MCF 10A (cell line): ENCODE measurements at regions of chr1 and their contacts with region 1.

Region 1: DNA sequence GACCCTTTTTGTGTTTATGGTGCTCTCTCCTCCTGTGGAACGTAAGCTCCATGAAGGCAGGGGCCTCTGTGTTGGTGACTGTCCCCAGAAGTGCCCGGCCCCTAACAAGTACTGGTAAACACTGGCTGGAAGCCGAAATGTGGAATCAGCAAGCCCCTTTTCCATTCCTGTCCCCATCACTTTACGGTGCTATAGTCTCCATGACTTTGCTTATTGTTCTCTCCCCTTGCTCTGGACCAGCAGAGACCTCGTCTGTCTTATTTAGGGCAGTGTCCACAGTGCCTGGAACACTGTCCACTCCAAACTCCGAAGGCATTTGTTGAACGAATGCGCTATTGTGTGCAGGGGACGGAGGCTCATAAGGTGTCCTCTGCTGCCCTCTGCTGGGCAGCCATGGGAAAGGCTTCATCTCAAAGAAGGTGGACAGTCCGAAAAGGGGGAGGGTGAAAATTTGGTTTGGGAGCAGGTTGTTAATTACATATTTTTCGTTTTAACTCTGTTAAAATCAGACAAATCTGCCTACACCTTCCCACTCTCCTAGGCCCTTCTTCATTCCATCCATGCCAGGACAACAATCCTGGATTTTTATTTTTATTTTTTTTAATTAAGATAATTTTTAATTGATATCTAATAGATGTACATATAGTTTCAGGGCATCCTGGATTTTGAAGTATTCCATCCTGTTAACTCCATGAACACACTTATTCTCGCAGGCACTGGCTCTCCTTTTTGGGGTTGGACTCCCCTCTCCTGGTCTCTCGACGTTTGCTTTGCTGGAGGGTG is 115.6 kb downstream of the PGBD5 start:
- DNase-seq: peak; percentile 96
- H3K4me3 Mint-ChIP-seq: no peak overlapping the region
- H3K27ac Mint-ChIP-seq: no peak overlapping the region
- H3K4me1 Mint-ChIP-seq: peaks cover 34% of the 10 kb centered on the region
- H3K27me3 Mint-ChIP-seq: peaks cover 15% of the 10 kb centered on the region
- CTCF ChIP-seq: peak; percentile 99

Region 2: GRCh38 chr1:229558571-229559335 is 751.8 kb before region 1 on chr1 and contains the start of gene ABCB10:
- CTCF ChIA-PET with region 1: interaction called, 3 read pairs
- POLR2A ChIA-PET with region 1: interaction called, 4 read pairs
- intact Hi-C with region 1: loop called (anchors 2 kb)
- DNase-seq: peak; percentile 100
- H3K4me3 Mint-ChIP-seq: peak within 1 kb of the TSS; percentile 83
- H3K27ac Mint-ChIP-seq: peak within 1 kb of the TSS; percentile 76
- H3K4me1 Mint-ChIP-seq: peaks cover 30% of the 10 kb centered on the region
- H3K27me3 Mint-ChIP-seq: no peaks in the 10 kb centered on the region
- CTCF ChIP-seq: peak; percentile 98
- total RNA-seq, gene ABCB10: 34.8 and 38.4 TPM in 2 replicates

Region 3: GRCh38 chr1:229570891-229571516 is 739.6 kb before region 1 on chr1:
- CTCF ChIA-PET with region 1: no interaction called
- POLR2A ChIA-PET with region 1: no interaction called
- intact Hi-C with region 1: no loop called
- DNase-seq: no peak
- H3K4me3 Mint-ChIP-seq: no peak overlapping the region
- H3K27ac Mint-ChIP-seq: no peak overlapping the region
- H3K4me1 Mint-ChIP-seq: no peaks in the 10 kb centered on the region
- H3K27me3 Mint-ChIP-seq: no peaks in the 10 kb centered on the region
- CTCF ChIP-seq: no peak

Region 4: DNA sequence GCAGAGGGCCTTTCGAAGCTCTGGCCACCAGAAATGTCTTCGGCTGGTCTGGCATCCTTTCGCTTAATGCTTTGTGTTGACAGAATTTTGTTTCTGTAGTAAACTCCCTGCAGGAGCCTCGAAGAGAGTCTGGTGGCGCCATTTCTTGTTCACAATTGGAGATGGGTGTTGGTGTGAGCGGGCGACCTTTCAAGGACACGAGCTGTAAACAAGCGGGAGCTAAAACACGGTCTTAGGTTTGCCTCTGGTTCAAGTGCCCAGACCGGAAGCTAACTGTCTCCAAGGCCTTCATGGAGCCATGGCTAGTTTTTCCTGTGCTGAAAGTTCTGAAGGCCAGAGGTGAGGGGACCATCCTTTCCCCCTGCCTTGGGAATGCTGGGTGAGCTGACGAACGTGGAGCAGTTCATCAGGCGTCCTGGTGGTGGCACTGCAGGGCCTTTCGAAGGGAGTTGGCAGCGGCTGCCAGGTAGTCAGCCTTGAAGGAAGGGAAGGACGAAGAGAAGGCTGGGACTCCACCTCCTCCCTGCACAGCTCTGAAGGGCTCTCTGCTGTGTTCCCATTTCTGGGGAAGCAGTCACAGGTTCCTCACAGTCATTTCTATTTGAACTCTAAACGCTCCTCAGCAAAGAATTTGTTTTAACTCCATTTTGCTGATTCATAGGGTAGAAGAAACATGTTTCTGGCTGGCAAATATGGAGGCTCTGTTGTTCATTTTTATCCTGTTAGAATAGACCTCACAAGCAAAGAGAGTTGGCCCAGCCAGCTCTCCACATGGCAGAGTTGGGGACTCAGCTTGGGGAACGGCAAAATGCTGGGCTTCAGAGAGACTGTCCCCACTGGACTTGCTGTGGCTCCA is 649.3 kb before region 1 on chr1:
- CTCF ChIA-PET with region 1: interaction called, 145 read pairs
- POLR2A ChIA-PET with region 1: interaction called, 10 read pairs
- intact Hi-C with region 1: loop called (anchors 1 kb)
- DNase-seq: peak; percentile 89
- H3K4me3 Mint-ChIP-seq: no peak overlapping the region
- H3K27ac Mint-ChIP-seq: peak overlapping the region; percentile 13
- H3K4me1 Mint-ChIP-seq: peaks cover 7% of the 10 kb centered on the region
- H3K27me3 Mint-ChIP-seq: no peaks in the 10 kb centered on the region
- CTCF ChIP-seq: peak; percentile 99

Region 5: GRCh38 chr1:229843627-229844238 is 466.8 kb before region 1 on chr1:
- CTCF ChIA-PET with region 1: interaction called, 4 read pairs
- POLR2A ChIA-PET with region 1: interaction called, 3 read pairs
- intact Hi-C with region 1: loop called (anchors 5 kb)
- DNase-seq: peak; percentile 91
- H3K4me3 Mint-ChIP-seq: peak overlapping the region; percentile 5
- H3K27ac Mint-ChIP-seq: peak overlapping the region; percentile 58
- H3K4me1 Mint-ChIP-seq: peaks cover 37% of the 10 kb centered on the region
- H3K27me3 Mint-ChIP-seq: no peaks in the 10 kb centered on the region
- CTCF ChIP-seq: no peak

Region 6: GRCh38 chr1:230084138-230084880 is 226.3 kb before region 1 on chr1:
- CTCF ChIA-PET with region 1: interaction called, 13 read pairs
- POLR2A ChIA-PET with region 1: interaction called, 3 read pairs
- intact Hi-C with region 1: loop called (anchors 1 kb)
- DNase-seq: peak; percentile 100
- H3K4me3 Mint-ChIP-seq: peak overlapping the region; percentile 46
- H3K27ac Mint-ChIP-seq: peak overlapping the region; percentile 80
- H3K4me1 Mint-ChIP-seq: peaks cover 71% of the 10 kb centered on the region
- H3K27me3 Mint-ChIP-seq: no peaks in the 10 kb centered on the region
- CTCF ChIP-seq: no peak

Region 7: DNA sequence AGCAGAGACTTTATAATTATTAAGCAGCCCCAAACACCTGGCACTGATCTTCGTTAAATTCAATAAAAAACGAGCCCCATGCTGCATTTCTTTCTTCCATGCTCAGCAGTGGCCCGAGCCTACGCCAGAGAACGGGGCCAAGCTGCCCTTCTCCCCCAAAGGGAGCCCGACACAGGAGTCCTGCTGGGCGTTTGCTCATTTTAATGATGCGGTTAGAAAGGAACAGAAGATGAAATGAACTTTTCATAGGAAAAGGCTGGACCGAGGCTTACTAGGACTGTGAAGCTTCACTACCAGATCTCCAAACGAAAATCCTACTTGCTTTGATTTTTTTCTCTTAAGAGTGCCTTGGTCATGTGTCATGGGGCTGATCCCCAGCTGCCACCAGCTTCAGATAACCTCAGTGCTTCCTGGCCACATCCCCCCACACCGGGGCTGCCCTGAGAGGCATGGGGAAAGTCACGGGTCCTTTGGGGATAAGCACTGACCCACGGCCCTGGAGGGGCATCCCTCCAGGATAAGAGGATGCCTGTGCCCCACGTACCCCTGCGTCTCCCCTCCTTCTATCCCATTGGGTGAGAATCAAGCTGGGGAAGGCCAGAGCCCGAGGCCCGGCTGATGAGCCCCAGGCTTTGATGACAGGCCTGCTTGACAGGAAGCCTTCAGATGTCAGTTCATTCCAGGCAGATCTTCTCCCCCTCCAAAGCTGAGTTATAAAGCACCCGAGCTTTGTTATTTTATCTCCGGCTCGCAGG is 81.4 kb after region 1 on chr1:
- CTCF ChIA-PET with region 1: no interaction called
- POLR2A ChIA-PET with region 1: no interaction called
- intact Hi-C with region 1: no loop called
- DNase-seq: no peak
- H3K4me3 Mint-ChIP-seq: no peak overlapping the region
- H3K27ac Mint-ChIP-seq: no peak overlapping the region
- H3K4me1 Mint-ChIP-seq: no peaks in the 10 kb centered on the region
- H3K27me3 Mint-ChIP-seq: peaks cover 11% of the 10 kb centered on the region
- CTCF ChIP-seq: no peak

Region 8: GRCh38 chr1:230426246-230427093 is 115.9 kb after region 1 on chr1 and contains the start of gene PGBD5:
- CTCF ChIA-PET with region 1: no interaction called
- POLR2A ChIA-PET with region 1: interaction called, 3 read pairs
- intact Hi-C with region 1: loop called (anchors 5 kb)
- DNase-seq: peak; percentile 88
- H3K4me3 Mint-ChIP-seq: peak within 1 kb of the TSS; percentile 63
- H3K27ac Mint-ChIP-seq: no peak within 1 kb of the TSS
- H3K4me1 Mint-ChIP-seq: peaks cover 17% of the 10 kb centered on the region
- H3K27me3 Mint-ChIP-seq: peaks cover 52% of the 10 kb centered on the region
- CTCF ChIP-seq: no peak
- total RNA-seq, gene PGBD5: 0.83 and 1.2 TPM in 2 replicates